PC-3 (cell line): ENCODE measurements at regions of chr10 and their contacts with region 1.

Region 1: DNA sequence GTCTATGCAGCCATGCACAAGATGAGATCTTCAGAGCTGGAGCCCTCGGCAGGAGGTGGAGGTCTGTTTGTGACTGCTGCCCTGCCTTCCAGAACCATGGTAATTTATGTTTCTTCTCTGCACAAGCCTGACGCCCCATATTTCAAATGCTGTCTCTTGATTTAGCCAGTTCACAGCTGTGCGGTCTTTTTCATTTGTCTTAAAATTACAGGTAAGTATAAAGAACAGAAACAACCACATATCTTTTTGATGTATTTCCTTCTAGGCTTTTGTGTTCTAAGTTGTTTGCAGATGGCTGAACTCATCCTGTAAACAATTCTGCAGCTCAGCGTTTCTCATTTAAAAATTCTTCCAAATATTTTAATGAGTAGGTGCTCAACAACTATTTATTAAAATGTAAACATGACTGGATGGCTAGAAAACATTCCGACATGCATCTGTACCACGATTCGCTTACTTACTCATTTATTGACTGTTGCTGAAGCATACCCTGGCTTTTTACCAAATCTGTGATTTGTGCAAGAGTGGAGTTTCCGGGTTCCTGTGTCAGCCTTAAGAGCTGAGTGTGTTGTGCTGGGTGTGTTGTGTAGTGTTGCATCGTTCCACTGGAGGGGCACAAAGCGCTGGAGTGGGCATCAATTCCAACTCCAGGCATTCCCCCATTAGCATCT is 58.9 kb downstream of the PIP4K2A start:
- DNase-seq: peak; percentile 93
- ATAC-seq: peak; percentile 87
- H3K4me3 ChIP-seq: peak overlapping the region; percentile 60
- H3K27ac ChIP-seq: peak overlapping the region; percentile 88
- H3K4me1 ChIP-seq: peaks cover 49% of the 10 kb centered on the region
- H3K27me3 ChIP-seq: no peaks in the 10 kb centered on the region
- CTCF ChIP-seq: no peak; the same call in 1 of the 2 replicates

Region 2: GRCh38 chr10:22625523-22626290 is 29.7 kb before region 1 on chr10:
- CTCF ChIA-PET with region 1: no interaction called
- POLR2A ChIA-PET with region 1: interaction called, 11 read pairs
- intact Hi-C with region 1: loop called (anchors 1 kb)
- DNase-seq: no peak
- ATAC-seq: no peak
- H3K4me3 ChIP-seq: no peak overlapping the region
- H3K27ac ChIP-seq: peak overlapping the region; percentile 5; the same call in 1 of the 2 replicates
- H3K4me1 ChIP-seq: peaks cover 82% of the 10 kb centered on the region
- H3K27me3 ChIP-seq: no peaks in the 10 kb centered on the region
- CTCF ChIP-seq: no peak

Region 3: GRCh38 chr10:22666287-22667092 is 11.0 kb after region 1 on chr10:
- CTCF ChIA-PET with region 1: no interaction called
- POLR2A ChIA-PET with region 1: no interaction called
- intact Hi-C with region 1: no loop called
- DNase-seq: no peak
- ATAC-seq: no peak
- H3K4me3 ChIP-seq: no peak overlapping the region
- H3K27ac ChIP-seq: no peak overlapping the region
- H3K4me1 ChIP-seq: no peaks in the 10 kb centered on the region
- H3K27me3 ChIP-seq: no peaks in the 10 kb centered on the region
- CTCF ChIP-seq: no peak